Activated CD4-positive, alpha-beta memory T cell treated with anti-CD3 and anti-CD28 coated beads, Interleukin-2, amount 10 ng/mL, durations not matched to agents 7 days and 5 days (primary cell): ENCODE measurements at regions of chr17 and their contacts with region 1.

Region 1: GRCh38 chr17:76103274-76104139 is at the start of gene EXOC7:
- DNase-seq: peak; percentile 94
- H3K4me3 Mint-ChIP-seq: peak within 1 kb of the TSS; percentile 95
- H3K27ac Mint-ChIP-seq: peak within 1 kb of the TSS; percentile 92
- H3K4me1 Mint-ChIP-seq: peaks cover 30% of the 10 kb centered on the region
- H3K27me3 Mint-ChIP-seq: no peaks in the 10 kb centered on the region
- total RNA-seq, gene EXOC7: 119 to 120 TPM

Region 2: GRCh38 chr17:76063875-76064546 is 39.5 kb before region 1 on chr17:
- CTCF ChIA-PET with region 1: interaction called, 3 read pairs
- POLR2A ChIA-PET with region 1: interaction called, 14 read pairs
- DNase-seq: peak; percentile 64
- H3K4me3 Mint-ChIP-seq: peak overlapping the region; percentile 60
- H3K27ac Mint-ChIP-seq: peak overlapping the region; percentile 88
- H3K4me1 Mint-ChIP-seq: peaks cover 29% of the 10 kb centered on the region
- H3K27me3 Mint-ChIP-seq: no peaks in the 10 kb centered on the region

Region 3: GRCh38 chr17:76271669-76272540 is 168.4 kb after region 1 on chr17:
- CTCF ChIA-PET with region 1: interaction called, 5 read pairs
- POLR2A ChIA-PET with region 1: interaction called, 37 read pairs
- DNase-seq: peak; percentile 80
- H3K4me3 Mint-ChIP-seq: peak overlapping the region; percentile 73
- H3K27ac Mint-ChIP-seq: peak overlapping the region; percentile 93
- H3K4me1 Mint-ChIP-seq: peaks cover 61% of the 10 kb centered on the region
- H3K27me3 Mint-ChIP-seq: no peaks in the 10 kb centered on the region